GM13976 (cell line): ENCODE measurements at regions of chr2 and their contacts with region 1.

Region 1: GRCh38 chr2:84495539-84496146 is 20.7 kb upstream of the DNAH6 start:
- DNase-seq: peak; percentile 31
- CTCF ChIP-seq: peak; percentile 54

Region 2: GRCh38 chr2:84619794-84620371 is 124.2 kb after region 1 on chr2:
- in situ Hi-C with region 1: no loop called
- DNase-seq: no peak
- CTCF ChIP-seq: no peak

Region 3: DNA sequence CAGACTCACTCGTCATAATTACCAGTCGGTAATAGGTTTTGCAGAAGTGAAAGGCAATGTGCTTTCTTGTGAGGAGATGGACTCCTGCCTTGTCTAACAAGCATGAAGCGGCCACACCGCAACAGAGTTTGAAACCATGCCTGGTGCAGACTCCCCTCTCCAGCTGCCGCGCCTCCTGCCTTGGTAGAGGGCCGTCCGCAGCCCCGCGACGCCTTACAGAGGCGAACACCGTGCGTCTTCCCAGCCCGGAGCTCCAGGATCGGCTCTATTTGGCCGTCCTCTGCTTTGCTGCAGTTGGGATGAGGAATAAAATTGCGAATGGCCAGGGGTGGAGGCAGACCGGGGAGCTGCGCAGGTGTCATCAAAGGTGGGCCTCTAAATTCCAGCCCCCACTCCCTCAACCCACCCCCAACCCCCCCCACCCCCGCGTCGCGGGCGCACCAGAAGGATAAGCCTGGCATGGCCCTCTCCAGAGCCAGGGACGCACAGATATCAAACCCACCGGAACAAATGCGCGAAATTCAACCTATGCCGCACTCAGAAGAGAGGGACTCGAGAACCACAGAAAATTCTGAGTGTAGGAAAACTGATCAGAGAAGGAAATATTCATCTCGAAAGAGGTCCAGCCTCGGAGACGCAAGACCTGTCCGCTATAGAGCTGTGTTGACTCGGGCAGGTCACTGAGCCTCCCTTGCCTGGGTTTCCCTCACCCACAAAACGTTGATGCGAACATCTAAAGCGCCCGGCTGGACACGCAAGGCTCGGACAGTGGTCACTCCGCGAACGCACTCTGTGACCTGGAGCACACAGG is 384.1 kb after region 1 on chr2:
- in situ Hi-C with region 1: loop called (anchors 10 kb)
- DNase-seq: peak; percentile 49
- CTCF ChIP-seq: no peak

Region 4: GRCh38 chr2:85277416-85278158 is 781.9 kb after region 1 on chr2:
- in situ Hi-C with region 1: loop called (anchors 25 kb)
- DNase-seq: no peak
- CTCF ChIP-seq: no peak